Activated naive CD4-positive, alpha-beta T cell treated with anti-CD3 and anti-CD28 coated beads for 36 hours (primary cell): ENCODE measurements at regions of chr1 and their contacts with region 1.

Region 1: DNA sequence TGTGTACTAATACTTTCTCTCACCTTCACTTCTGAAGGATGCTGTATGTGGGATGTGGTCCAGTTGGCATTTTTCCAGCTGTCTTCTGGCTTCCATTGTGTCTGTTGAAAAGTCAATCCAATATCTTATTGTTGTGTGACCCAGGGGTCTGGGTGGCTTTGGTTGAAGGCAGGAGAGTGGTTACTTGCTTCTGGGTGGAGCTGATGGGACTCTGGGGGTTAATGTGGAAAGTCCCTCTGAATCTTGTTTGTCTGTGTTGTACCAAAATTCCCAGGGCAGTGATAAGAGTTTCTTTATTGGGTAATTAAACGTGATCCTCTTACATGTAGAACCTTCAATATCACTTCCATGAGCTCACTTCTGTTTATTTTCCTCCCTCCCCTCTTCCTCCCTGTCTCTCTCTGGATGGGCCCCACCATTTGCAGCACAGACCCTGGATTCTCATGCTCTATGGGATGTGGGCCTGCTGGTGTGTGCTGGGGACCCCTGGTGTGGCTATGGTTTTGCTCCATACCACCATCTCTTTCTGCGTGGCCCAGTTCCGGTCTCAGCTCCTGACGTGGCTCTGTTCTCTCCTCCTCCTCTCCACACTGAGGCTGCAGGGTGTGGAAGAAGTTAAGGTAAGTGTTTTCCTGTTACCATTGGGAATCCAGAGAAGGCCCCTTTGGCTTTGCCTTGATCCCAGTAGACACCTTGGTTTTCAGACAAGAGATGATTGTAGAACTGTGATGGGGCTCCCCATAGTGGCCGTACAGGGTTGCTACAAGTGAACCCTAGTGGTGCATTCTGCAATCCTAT is 71.5 kb downstream of the HHAT start:
- DNase-seq: peak; percentile 85
- H3K4me3 Mint-ChIP-seq: peak overlapping the region; percentile 49
- H3K27ac Mint-ChIP-seq: peak overlapping the region; percentile 93
- H3K4me1 Mint-ChIP-seq: peaks cover 44% of the 10 kb centered on the region
- H3K27me3 Mint-ChIP-seq: peaks cover 5% of the 10 kb centered on the region

Region 2: GRCh38 chr1:209769171-209769904 is 630.9 kb before region 1 on chr1:
- CTCF ChIA-PET with region 1: no interaction called
- intact Hi-C with region 1: loop called (anchors 2 kb)
- DNase-seq: peak; percentile 92
- H3K4me3 Mint-ChIP-seq: no peak overlapping the region
- H3K27ac Mint-ChIP-seq: no peak overlapping the region
- H3K4me1 Mint-ChIP-seq: peaks cover 10% of the 10 kb centered on the region
- H3K27me3 Mint-ChIP-seq: no peaks in the 10 kb centered on the region

Region 3: DNA sequence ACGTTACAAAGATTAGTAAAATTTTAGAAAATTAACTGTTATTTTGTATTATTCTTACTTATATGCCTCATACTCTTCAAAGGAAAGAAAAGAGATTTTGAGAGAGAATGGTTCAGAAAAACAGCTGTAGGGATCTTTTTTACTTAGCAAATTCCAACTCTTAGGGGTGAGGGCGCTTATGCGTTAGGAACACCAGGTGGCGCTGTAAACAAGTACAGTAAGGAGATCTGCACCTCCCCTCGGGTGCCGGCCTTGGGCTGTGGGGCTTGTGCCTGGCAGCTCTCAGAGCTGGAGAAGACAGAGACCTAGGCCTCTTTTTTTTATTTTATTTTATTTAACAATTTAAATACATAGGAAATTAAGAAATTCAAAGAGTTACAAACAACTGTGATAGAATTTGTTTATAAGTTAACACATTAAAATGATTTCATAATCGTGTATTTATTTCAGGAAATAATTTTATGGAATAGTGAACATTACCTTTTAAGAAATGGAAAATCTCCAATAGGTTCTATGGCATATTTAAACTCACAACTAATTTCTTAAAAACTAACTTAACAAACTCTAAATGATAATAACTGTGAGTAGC is 539.9 kb before region 1 on chr1:
- CTCF ChIA-PET with region 1: interaction called, 4 read pairs
- intact Hi-C with region 1: loop called (anchors 1 kb)
- DNase-seq: peak; percentile 83
- H3K4me3 Mint-ChIP-seq: no peak overlapping the region
- H3K27ac Mint-ChIP-seq: no peak overlapping the region
- H3K4me1 Mint-ChIP-seq: no peaks in the 10 kb centered on the region
- H3K27me3 Mint-ChIP-seq: peaks cover 4% of the 10 kb centered on the region

Region 4: GRCh38 chr1:210250998-210251679 is 149.1 kb before region 1 on chr1:
- CTCF ChIA-PET with region 1: interaction called, 3 read pairs
- intact Hi-C with region 1: loop called (anchors 2 kb)
- DNase-seq: peak; percentile 61
- H3K4me3 Mint-ChIP-seq: peak overlapping the region; percentile 40
- H3K27ac Mint-ChIP-seq: no peak overlapping the region
- H3K4me1 Mint-ChIP-seq: peaks cover 27% of the 10 kb centered on the region
- H3K27me3 Mint-ChIP-seq: peaks cover 77% of the 10 kb centered on the region

Region 5: DNA sequence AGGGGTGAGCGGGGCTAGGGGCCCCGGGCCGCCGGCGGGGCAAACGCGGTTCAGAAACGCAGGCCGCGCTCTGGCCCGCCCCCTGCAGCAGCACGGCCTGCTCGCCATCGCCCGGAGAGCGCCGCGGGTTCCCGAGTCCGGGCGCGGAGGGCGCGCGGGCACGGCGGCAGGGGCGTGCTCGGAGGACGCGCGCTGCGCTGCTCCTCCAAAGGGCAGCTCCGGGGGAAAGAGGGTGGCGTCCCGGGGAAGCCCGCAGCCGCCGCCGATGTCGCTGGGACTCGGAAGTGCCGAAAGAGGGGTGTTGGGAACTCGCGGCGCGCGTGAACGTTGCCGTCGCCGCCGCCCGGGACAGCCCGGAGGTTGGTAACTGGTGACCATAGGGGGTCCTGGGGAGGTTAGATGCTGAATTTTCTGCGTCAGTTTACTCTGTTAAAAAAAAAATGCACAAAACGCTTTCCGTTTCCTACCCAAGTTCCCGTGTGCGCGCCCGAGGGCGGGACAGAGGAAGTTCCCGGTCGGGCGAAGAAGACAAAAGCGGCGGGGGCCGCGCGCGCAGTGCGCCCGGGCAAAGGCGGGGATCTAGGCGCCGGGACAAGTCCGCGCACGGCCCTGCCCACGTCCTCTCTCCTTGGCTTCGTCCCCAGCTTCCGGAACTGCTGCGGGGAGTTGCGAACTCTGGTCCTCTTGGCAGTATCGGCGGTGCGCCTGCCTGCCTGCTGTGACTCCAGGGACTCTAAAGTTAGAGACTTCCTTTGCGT is 71.3 kb before region 1 on chr1 and contains the start of gene HHAT:
- CTCF ChIA-PET with region 1: interaction called, 9 read pairs
- intact Hi-C with region 1: loop called (anchors 1 kb)
- DNase-seq: peak; percentile 84
- H3K4me3 Mint-ChIP-seq: peak within 1 kb of the TSS; percentile 93
- H3K27ac Mint-ChIP-seq: peak within 1 kb of the TSS; percentile 95
- H3K4me1 Mint-ChIP-seq: peaks cover 41% of the 10 kb centered on the region
- H3K27me3 Mint-ChIP-seq: peaks cover 4% of the 10 kb centered on the region
- total RNA-seq, gene HHAT: 3.6 to 3.9 TPM

Region 6: GRCh38 chr1:210360852-210361477 is 39.3 kb before region 1 on chr1:
- CTCF ChIA-PET with region 1: interaction called, 19 read pairs
- intact Hi-C with region 1: loop called (anchors 1 kb)
- DNase-seq: no peak
- H3K4me3 Mint-ChIP-seq: no peak overlapping the region
- H3K27ac Mint-ChIP-seq: peak overlapping the region; percentile 13
- H3K4me1 Mint-ChIP-seq: peaks cover 10% of the 10 kb centered on the region
- H3K27me3 Mint-ChIP-seq: no peaks in the 10 kb centered on the region

Region 7: DNA sequence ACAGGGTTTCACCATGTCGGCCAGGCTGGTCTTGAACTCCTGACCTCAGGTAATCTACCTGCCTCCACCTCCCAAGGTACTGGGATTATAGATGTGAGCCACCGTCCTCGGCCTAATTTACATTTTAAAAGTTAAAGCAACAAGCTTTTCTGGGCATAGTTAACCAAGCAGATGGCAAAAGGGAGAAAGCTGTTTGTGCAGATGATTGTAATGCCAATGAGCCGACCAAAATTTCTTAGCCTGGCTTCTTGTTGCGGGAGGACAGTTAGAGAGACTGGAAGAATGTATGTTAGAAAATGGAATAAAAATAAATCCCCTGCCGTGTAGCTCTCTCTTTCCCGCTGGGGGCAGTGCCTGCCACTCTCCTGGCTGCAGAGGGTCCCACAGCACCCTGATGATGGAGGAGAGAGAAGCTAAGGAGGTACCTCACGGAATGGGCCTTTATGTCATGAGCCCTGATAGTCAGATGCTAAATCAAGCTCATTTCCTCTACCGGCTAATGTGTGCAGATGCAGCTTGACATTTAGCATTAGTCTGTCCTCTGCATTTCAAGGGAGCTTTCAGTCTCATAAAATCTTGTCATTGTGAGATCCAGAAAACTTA is 15.7 kb after region 1 on chr1:
- CTCF ChIA-PET with region 1: no interaction called
- intact Hi-C with region 1: no loop called
- DNase-seq: no peak
- H3K4me3 Mint-ChIP-seq: no peak overlapping the region
- H3K27ac Mint-ChIP-seq: no peak overlapping the region
- H3K4me1 Mint-ChIP-seq: peaks cover 3% of the 10 kb centered on the region
- H3K27me3 Mint-ChIP-seq: no peaks in the 10 kb centered on the region

Region 8: DNA sequence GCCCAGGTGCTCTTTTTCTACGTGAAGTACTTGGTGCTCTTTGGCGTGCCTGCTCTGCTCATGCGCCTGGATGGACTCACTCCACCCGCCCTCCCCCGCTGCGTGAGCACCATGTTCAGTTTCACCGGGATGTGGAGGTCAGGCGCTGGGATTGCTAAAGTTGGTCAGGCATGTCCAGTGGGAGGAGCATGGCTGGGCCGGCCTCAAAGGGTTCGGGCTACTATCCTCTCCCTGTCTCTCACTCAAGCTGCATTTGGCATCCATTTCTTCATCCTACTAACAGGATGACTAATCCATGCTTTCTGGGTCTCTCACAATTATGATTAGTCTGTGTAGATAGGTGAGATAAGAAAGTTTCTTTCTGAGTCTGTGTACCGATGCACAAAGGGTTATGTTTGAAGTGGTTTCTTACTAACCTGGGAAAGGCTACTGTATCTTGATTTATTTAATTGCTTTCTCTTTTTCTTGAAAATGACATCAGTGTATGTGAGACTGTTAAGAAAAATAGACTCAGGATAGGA is 64.3 kb after region 1 on chr1:
- CTCF ChIA-PET with region 1: no interaction called
- intact Hi-C with region 1: loop called (anchors 1 kb)
- DNase-seq: peak; percentile 22
- H3K4me3 Mint-ChIP-seq: no peak overlapping the region
- H3K27ac Mint-ChIP-seq: peak overlapping the region; percentile 57
- H3K4me1 Mint-ChIP-seq: peaks cover 23% of the 10 kb centered on the region
- H3K27me3 Mint-ChIP-seq: peaks cover 2% of the 10 kb centered on the region

Region 9: GRCh38 chr1:210568631-210569030 is 168.4 kb after region 1 on chr1:
- CTCF ChIA-PET with region 1: no interaction called
- intact Hi-C with region 1: no loop called
- DNase-seq: no peak
- H3K4me3 Mint-ChIP-seq: no peak overlapping the region
- H3K27ac Mint-ChIP-seq: no peak overlapping the region
- H3K4me1 Mint-ChIP-seq: no peaks in the 10 kb centered on the region
- H3K27me3 Mint-ChIP-seq: no peaks in the 10 kb centered on the region